ENCODE measurements at regions of chr1 and their contacts with region 1.

Region 1: GRCh38 chr1:17011439-17012307 is at the start of gene ATP13A2:
- DNase-seq: peak; percentile 77 to 94 (median 92)
- ATAC-seq: peak; percentile 91 to 95
- H3K4me3 ChIP-seq: peak within 1 kb of the TSS; percentile 83
- H3K27ac ChIP-seq: no peak within 1 kb of the TSS
- H3K4me1 ChIP-seq: no peaks in the 10 kb centered on the region
- H3K27me3 ChIP-seq: no peaks in the 10 kb centered on the region
- total RNA-seq, gene ATP13A2: 12.9 to 15.1 (median 14.3) TPM

Region 2: DNA sequence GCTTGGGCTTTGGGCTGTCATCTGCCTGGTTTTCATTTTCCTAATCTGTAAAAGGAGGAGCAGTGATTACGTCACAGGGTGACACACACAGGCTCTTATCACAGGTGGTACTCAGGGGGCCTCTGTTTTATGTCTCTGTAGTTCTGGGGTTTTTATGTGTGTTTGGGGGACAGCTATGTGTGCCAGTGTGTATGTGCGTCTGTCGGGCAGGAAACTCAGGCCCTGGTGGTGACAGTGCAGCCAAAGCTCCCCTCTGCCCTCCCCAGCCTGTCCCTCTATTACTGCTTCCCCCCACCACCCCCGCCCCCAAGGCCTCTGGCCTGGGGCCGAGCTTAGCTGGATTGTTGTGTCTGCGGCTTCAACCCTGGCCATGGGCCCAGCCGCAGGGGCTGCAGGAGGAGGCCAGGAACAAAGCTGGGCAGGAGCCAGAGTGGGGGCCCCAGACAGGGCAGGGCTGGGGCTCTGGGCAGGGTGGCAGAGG is 44.5 kb before region 1 on chr1:
- intact Hi-C with region 1: loop called in 1 of 4 experiments (anchors 5 kb)
- DNase-seq: peak; percentile 62 to 91 (median 90)
- ATAC-seq: peak; percentile 31 to 51
- H3K4me3 ChIP-seq: no peak overlapping the region
- H3K27ac ChIP-seq: no peak overlapping the region
- H3K4me1 ChIP-seq: no peaks in the 10 kb centered on the region
- H3K27me3 ChIP-seq: no peaks in the 10 kb centered on the region

Region 3: GRCh38 chr1:17053685-17054410 is 42.2 kb after region 1 on chr1 and contains the start of gene SDHB:
- intact Hi-C with region 1: loop called in 1 of 4 experiments (anchors 5 kb)
- DNase-seq: peak; percentile 98 to 99 (median 99)
- ATAC-seq: peak; percentile 99
- H3K4me3 ChIP-seq: peak within 1 kb of the TSS; percentile 84
- H3K27ac ChIP-seq: peak within 1 kb of the TSS; percentile 96
- H3K4me1 ChIP-seq: no peaks in the 10 kb centered on the region
- H3K27me3 ChIP-seq: no peaks in the 10 kb centered on the region
- total RNA-seq, gene SDHB: 209 to 255 (median 239) TPM